Activated naive CD4-positive, alpha-beta T cell treated with anti-CD3 and anti-CD28 coated beads for 36 hours (primary cell): ENCODE measurements at regions of chr2 and their contacts with region 1.

Region 1: GRCh38 chr2:73085691-73086360 is 14.3 kb upstream of the SFXN5 start:
- DNase-seq: peak; percentile 90
- H3K4me3 Mint-ChIP-seq: no peak overlapping the region
- H3K27ac Mint-ChIP-seq: no peak overlapping the region
- H3K4me1 Mint-ChIP-seq: no peaks in the 10 kb centered on the region
- H3K27me3 Mint-ChIP-seq: no peaks in the 10 kb centered on the region

Region 2: GRCh38 chr2:72993147-72993932 is 92.5 kb before region 1 on chr2:
- CTCF ChIA-PET with region 1: interaction called, 5 read pairs
- intact Hi-C with region 1: loop called (anchors 2 kb)
- DNase-seq: peak; percentile 42
- H3K4me3 Mint-ChIP-seq: no peak overlapping the region
- H3K27ac Mint-ChIP-seq: no peak overlapping the region
- H3K4me1 Mint-ChIP-seq: no peaks in the 10 kb centered on the region
- H3K27me3 Mint-ChIP-seq: no peaks in the 10 kb centered on the region

Region 3: DNA sequence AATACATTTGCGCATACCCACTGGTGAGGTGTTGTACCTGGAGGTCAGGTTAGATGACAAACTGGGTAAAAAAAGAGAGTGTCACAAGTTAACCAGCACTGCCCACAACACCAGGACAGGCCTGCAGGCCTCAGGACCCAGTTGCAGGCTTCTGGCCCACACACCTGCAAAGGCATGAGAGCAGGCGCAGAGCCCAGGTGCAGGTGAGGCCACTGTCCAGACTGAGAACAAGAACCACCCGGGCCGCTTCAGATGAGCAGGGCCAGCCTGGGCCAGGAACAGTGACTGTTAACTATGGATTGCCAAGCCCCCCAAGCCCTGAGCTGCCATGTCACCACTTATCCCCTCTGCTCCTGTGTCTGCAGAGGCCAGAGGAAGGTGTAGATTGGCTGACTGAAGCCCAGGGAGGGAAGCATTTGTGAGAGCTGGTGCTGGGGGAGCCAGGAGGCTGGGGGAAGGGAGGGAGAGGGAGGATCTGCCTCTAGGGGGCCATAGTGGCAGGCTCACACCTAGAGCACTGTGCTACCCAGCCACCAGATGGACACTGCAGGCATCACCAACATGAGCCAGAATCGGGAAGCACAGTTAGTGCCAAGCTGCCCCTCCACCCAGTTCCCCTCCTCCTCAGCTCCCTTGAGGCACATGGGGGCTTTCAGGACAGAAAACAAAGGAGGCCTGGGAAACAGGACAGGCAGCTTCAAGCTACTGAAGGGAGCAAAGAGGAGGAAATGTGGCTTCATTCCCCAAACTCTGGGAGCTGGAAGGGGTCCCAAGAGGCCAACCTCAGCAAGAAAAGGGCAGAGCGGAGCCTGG is 49.7 kb before region 1 on chr2:
- CTCF ChIA-PET with region 1: no interaction called
- intact Hi-C with region 1: no loop called
- DNase-seq: no peak
- H3K4me3 Mint-ChIP-seq: no peak overlapping the region
- H3K27ac Mint-ChIP-seq: no peak overlapping the region
- H3K4me1 Mint-ChIP-seq: no peaks in the 10 kb centered on the region
- H3K27me3 Mint-ChIP-seq: no peaks in the 10 kb centered on the region

Region 4: DNA sequence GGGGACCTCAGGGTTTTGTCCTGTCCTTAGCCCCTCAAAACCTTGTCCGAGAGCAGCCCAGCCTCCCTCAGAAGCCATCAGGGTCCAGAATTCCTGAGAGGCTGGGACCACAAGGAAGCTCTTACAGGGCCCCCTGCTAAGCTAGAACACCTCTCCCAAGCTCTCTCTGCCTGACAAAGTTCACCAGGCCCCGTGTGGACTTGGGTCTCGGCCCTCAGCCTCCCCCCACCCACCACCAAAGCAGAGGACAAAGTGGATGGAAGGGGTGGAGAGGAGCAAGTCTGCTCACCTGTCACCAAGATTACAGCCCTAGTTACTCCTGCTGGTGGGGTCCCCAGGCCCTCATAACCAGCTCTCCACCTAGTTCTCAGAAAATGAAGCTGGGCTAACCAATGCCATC is 10.1 kb after region 1 on chr2:
- CTCF ChIA-PET with region 1: interaction called, 22 read pairs
- intact Hi-C with region 1: no loop called
- DNase-seq: no peak
- H3K4me3 Mint-ChIP-seq: no peak overlapping the region
- H3K27ac Mint-ChIP-seq: no peak overlapping the region
- H3K4me1 Mint-ChIP-seq: no peaks in the 10 kb centered on the region
- H3K27me3 Mint-ChIP-seq: no peaks in the 10 kb centered on the region

Region 5: GRCh38 chr2:73112913-73113633 is 27.2 kb after region 1 on chr2 and contains the start of gene RAB11FIP5:
- CTCF ChIA-PET with region 1: interaction called, 14 read pairs
- intact Hi-C with region 1: no loop called
- DNase-seq: peak; percentile 78
- H3K4me3 Mint-ChIP-seq: peak within 1 kb of the TSS; percentile 81
- H3K27ac Mint-ChIP-seq: no peak within 1 kb of the TSS
- H3K4me1 Mint-ChIP-seq: peaks cover 21% of the 10 kb centered on the region
- H3K27me3 Mint-ChIP-seq: no peaks in the 10 kb centered on the region
- total RNA-seq, gene RAB11FIP5: 7.3 to 7.4 TPM

Region 6: GRCh38 chr2:73156539-73157124 is 70.8 kb after region 1 on chr2:
- CTCF ChIA-PET with region 1: interaction called, 75 read pairs
- intact Hi-C with region 1: loop called (anchors 1 kb)
- DNase-seq: peak; percentile 62
- H3K4me3 Mint-ChIP-seq: no peak overlapping the region
- H3K27ac Mint-ChIP-seq: no peak overlapping the region
- H3K4me1 Mint-ChIP-seq: no peaks in the 10 kb centered on the region
- H3K27me3 Mint-ChIP-seq: peaks cover 30% of the 10 kb centered on the region

Region 7: DNA sequence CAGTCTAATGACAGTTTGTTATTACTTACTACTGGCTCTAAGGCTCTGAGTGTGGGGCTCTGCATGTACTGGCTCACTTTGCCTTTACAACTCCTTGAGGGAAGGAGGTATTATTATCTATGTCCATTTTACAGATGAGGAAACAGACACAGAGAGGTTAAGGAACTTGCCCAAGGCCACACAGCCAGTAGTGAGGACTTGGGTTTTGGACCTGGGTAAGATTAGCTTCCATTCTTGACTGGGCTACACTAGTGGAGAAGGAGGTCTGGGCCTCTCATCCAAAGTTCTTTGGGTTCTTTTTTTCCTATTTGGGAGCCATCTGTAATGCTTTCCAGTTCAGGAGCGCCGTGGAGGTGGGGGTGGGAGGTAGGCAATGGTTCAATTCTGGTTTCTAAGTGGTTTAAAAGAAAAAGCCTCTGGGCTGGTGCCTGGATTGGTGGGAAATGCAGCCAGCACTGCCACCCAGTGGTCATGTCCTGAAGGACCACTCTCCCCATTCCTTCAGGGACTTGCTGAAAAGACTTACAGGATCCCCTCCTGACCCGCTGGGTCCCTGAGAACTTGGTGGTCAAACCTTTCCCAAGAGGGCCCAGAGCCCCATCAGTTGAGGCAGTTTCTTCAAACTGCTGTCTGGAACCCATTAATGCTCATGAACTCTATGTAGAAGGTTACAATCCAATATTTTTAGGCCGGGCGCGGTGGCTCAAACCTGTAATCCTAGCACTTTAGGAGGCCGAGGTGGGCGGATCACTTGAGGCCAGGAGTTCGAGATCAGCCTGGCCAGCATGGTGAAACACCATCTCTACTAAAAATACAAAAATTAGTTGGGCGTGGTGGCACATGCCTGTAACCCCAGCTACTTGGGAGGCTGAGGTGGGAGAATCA is 77.9 kb after region 1 on chr2:
- CTCF ChIA-PET with region 1: interaction called, 20 read pairs
- intact Hi-C with region 1: loop called (anchors 1 kb)
- DNase-seq: peak; percentile 82
- H3K4me3 Mint-ChIP-seq: no peak overlapping the region
- H3K27ac Mint-ChIP-seq: no peak overlapping the region
- H3K4me1 Mint-ChIP-seq: no peaks in the 10 kb centered on the region
- H3K27me3 Mint-ChIP-seq: peaks cover 2% of the 10 kb centered on the region